Right ventricle myocardium inferior (tissue), 1 donor: ENCODE measurements at regions of chr5 and their contacts with region 1.

Region 1: GRCh38 chr5:149834246-149834855 is 104.2 kb downstream of the PPARGC1B start:
- DNase-seq: no peak
- ATAC-seq: peak; percentile 37

Region 2: DNA sequence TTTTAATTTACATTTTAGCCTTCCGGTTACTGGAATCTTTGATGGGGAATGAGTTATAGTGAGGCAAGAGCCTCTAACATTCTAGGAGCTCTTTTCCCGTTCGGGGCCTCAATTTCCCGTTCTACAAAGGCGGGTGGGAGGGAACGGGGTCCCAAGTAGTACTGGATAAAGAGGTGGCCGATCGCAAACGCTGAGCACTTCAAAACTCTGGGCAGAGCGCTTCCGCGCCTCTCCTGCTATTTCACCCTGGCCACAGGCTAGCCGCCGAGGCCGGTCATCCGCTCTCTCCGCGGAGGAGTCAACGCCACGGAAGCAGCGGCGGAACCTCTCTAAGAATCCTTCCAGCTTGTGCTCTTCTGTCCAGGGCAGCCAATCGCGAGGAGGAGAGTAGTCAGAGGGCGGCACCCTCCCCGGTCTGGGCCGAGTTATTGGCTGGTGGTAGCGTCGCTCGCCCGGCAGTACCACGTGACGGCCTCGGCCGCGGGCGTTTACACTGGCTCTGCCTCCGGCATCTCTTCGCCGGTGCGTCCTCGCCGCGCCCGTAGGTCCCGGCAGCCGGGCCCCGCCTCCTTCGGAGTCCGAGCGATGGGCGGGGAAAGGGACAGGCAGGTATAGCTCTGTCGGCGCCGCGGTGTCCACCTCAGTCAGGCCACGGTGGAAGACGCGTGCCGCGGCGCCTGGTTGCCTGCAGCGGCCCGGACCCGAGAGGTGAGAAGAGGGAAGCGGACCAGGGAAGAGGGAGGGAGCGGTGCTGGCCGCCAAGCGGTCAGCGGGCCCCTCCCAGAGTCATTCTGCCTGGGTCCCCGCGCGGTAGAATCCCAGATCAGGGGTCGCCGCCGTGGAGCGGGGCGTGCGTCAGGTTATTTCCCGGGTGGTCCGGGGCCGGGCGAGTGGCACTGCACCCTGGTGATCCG is 126.2 kb after region 1 on chr5 and contains the start of gene SLC26A2:
- intact Hi-C with region 1: loop called (anchors 5 kb)
- DNase-seq: peak; percentile 98
- ATAC-seq: peak; percentile 100
- total RNA-seq, gene SLC26A2: 4.3 TPM

Region 3: GRCh38 chr5:149990518-149991376 is 156.4 kb after region 1 on chr5:
- intact Hi-C with region 1: loop called (anchors 2 kb)
- DNase-seq: no peak
- ATAC-seq: peak; percentile 67

Region 4: DNA sequence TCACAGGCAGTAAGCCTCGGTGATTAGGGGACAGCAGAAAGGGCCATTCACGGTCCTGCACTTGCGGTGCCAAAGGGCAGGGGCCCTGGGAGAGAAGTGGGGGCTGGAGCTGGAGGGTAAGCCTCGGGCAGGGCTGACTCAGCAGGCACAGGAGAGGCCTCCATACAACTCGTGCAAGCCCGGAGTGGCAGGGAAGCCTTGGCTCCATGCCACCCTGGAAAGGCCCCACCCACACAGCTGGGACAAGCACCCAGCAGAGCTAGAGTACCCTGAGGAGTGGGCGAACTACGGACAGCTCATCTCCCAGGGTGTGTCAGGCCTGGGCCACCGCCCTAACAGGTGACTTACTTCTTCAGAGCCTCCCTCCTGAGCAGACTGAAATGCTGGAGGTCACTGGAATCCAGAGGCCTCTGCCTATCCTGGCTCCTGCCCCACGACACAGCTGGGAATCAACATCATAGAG is 460.9 kb after region 1 on chr5:
- intact Hi-C with region 1: no loop called
- DNase-seq: no peak
- ATAC-seq: no peak